Activated CD8-positive, alpha-beta T cell treated with anti-CD3 and anti-CD28 coated beads for 36 hours (primary cell): ENCODE measurements at regions of chr16 and their contacts with region 1.

Region 1: DNA sequence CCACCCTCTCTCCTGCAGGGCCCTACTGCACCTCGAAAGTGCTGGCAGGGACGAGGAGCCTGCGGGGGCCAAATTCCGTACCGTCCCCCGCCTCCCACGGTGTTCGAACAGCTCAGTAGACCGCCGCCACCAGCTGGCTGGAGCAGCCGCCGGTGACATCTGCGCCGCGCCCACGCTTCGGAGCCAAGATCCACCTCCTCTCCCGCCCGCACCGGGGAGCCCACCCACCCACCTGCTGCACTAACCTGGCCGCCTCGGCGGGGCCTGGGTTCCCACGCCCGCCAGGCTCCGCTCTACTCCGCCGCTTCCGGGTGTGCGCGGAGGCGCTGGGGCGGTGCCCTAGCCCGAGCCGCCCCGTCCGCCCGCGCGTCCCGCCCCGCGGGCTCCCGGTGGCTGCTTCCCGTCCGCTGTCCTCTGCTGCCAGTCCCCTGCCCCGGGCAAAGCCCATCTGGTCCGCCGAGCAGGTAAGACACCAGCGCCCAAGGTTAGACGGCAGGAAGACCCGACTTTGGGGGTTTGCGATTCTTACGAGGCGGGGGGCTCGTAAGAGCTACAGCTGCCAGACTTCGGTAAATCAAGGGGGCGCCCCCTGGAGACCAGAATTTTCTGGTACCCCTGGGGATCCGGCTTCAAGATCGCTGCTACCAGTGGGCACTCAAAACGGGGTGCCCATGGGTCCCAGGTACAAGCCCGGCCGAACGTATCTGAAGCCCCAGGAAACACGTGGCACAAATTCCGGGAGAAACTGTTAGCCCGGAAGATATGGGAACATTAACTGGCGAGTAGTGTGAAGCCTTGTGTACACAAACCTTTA is at the starts of genes FBXL8 and TRADD:
- DNase-seq: peak; percentile 87
- ATAC-seq: peak; percentile 61
- H3K4me3 Mint-ChIP-seq: peak within 1 kb of the TSS; percentile 90
- H3K27ac Mint-ChIP-seq: peak within 1 kb of the TSS; percentile 92
- H3K4me1 Mint-ChIP-seq: peaks cover 53% of the 10 kb centered on the region
- H3K27me3 Mint-ChIP-seq: peaks cover 32% of the 10 kb centered on the region
- CTCF ChIP-seq: peak; percentile 31
- total RNA-seq, gene FBXL8: 27.1 to 28.6 TPM
- total RNA-seq, gene TRADD: 28.4 to 31.2 TPM

Region 2: DNA sequence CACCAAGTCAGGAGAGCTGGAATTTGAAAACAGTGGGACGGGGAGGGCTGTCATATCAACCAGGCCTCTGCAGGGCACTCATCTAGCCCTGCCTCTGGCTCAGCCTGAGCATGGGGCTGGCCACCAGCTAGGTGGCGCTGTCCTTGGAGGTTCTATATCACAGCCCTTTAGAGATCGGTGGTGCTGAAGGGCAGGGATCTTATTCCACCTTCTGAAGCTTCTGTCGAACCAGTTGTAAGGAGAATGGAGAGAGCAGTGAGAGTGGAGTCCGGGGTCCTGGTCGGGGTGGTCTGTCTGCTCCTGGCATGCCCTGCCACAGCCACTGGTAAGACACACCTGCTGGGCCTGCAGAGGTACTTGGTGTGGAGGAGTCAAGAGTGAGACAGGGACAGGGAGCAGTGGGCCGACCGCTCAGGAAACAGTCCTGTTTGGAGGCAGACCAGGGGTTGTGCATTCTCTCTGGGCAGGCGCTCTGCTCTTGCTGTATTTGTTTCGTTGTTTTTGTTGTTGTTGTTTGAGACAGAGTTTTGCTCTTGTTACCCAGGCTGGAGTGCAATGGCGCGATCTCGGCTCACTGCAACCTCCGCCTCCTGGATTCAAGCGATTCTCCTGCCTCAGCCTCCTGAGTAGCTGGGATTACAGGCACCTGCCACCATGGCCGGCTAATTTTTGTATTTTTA is 198.6 kb before region 1 on chr16 and contains the start of gene CES3:
- CTCF ChIA-PET with region 1: interaction called, 32 read pairs
- POLR2A ChIA-PET with region 1: no interaction called
- intact Hi-C with region 1: no loop called
- DNase-seq: peak; percentile 84
- ATAC-seq: peak; percentile 94
- H3K4me3 Mint-ChIP-seq: peak within 1 kb of the TSS; percentile 24
- H3K27ac Mint-ChIP-seq: peak within 1 kb of the TSS; percentile 83
- H3K4me1 Mint-ChIP-seq: peaks cover 16% of the 10 kb centered on the region
- H3K27me3 Mint-ChIP-seq: peaks cover 4% of the 10 kb centered on the region
- CTCF ChIP-seq: peak; percentile 78
- total RNA-seq, gene CES3: 2.1 to 2.9 TPM

Region 3: GRCh38 chr16:67017810-67018488 is 141.9 kb before region 1 on chr16:
- CTCF ChIA-PET with region 1: interaction called, 187 read pairs
- POLR2A ChIA-PET with region 1: interaction called, 5 read pairs
- intact Hi-C with region 1: loop called (anchors 5 kb)
- DNase-seq: peak; percentile 95
- ATAC-seq: peak; percentile 87
- H3K4me3 Mint-ChIP-seq: no peak overlapping the region
- H3K27ac Mint-ChIP-seq: peak overlapping the region; percentile 52
- H3K4me1 Mint-ChIP-seq: peaks cover 17% of the 10 kb centered on the region
- H3K27me3 Mint-ChIP-seq: no peaks in the 10 kb centered on the region
- CTCF ChIP-seq: peak; percentile 78

Region 4: GRCh38 chr16:67043420-67043819 is 116.4 kb before region 1 on chr16:
- CTCF ChIA-PET with region 1: interaction called, 19 read pairs
- POLR2A ChIA-PET with region 1: no interaction called
- intact Hi-C with region 1: no loop called
- DNase-seq: no peak
- ATAC-seq: no peak
- H3K4me3 Mint-ChIP-seq: no peak overlapping the region
- H3K27ac Mint-ChIP-seq: no peak overlapping the region
- H3K4me1 Mint-ChIP-seq: peaks cover 16% of the 10 kb centered on the region
- H3K27me3 Mint-ChIP-seq: no peaks in the 10 kb centered on the region
- CTCF ChIP-seq: no peak

Region 5: DNA sequence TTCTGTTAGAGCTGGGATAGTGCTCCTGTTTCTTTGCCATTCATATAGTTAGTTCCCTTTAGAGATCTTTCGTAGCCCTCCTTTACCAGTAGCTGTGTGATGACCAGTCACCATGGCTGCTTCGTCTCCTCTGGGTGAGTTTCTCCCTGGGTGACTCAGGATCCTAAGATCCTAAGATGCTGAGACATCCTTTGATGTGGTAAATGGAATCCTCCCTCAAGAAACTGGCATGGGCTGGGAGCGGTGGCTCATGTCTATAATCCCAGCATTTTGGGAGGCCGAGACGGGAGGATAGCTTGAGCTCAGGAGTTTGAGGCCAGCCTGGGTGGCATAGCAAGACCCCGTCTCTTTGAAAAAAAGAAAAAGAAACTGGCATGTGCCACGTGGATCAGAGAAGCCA is 44.2 kb before region 1 on chr16:
- CTCF ChIA-PET with region 1: interaction called, 12 read pairs
- POLR2A ChIA-PET with region 1: interaction called, 3 read pairs
- intact Hi-C with region 1: no loop called
- DNase-seq: no peak
- ATAC-seq: no peak
- H3K4me3 Mint-ChIP-seq: no peak overlapping the region
- H3K27ac Mint-ChIP-seq: no peak overlapping the region
- H3K4me1 Mint-ChIP-seq: peaks cover 28% of the 10 kb centered on the region
- H3K27me3 Mint-ChIP-seq: no peaks in the 10 kb centered on the region
- CTCF ChIP-seq: no peak

Region 6: GRCh38 chr16:67173808-67174705 is 14.3 kb after region 1 on chr16:
- CTCF ChIA-PET with region 1: interaction called, 209 read pairs
- POLR2A ChIA-PET with region 1: interaction called, 67 read pairs
- intact Hi-C with region 1: no loop called
- DNase-seq: peak; percentile 85
- ATAC-seq: peak; percentile 50
- H3K4me3 Mint-ChIP-seq: peak overlapping the region; percentile 85
- H3K27ac Mint-ChIP-seq: peak overlapping the region; percentile 34
- H3K4me1 Mint-ChIP-seq: peaks cover 55% of the 10 kb centered on the region
- H3K27me3 Mint-ChIP-seq: peaks cover 67% of the 10 kb centered on the region
- CTCF ChIP-seq: peak; percentile 19